CD14-positive monocyte (primary cell): ENCODE measurements at regions of chr11 and their contacts with region 1.

Region 1: GRCh38 chr11:119474682-119475596 is 52.0 kb upstream of the THY1 start:
- DNase-seq: peak; percentile 24 to 49 (median 49)
- H3K4me3 ChIP-seq: no peak overlapping the region
- H3K4me3 Mint-ChIP-seq: no peak overlapping the region
- H3K27ac ChIP-seq: no peak overlapping the region
- H3K27ac Mint-ChIP-seq: peak overlapping the region in 1 of 7 donors; percentile 21
- H3K4me1 ChIP-seq: no peaks in the 10 kb centered on the region
- H3K4me1 Mint-ChIP-seq: peaks cover 4% of the 10 kb centered on the region
- H3K27me3 ChIP-seq: no peaks in the 10 kb centered on the region
- H3K27me3 Mint-ChIP-seq: peaks cover 8 to 22% (median 10%) of the 10 kb centered on the region in 3 donors
- CTCF ChIP-seq: peak; percentile 89

Region 2: DNA sequence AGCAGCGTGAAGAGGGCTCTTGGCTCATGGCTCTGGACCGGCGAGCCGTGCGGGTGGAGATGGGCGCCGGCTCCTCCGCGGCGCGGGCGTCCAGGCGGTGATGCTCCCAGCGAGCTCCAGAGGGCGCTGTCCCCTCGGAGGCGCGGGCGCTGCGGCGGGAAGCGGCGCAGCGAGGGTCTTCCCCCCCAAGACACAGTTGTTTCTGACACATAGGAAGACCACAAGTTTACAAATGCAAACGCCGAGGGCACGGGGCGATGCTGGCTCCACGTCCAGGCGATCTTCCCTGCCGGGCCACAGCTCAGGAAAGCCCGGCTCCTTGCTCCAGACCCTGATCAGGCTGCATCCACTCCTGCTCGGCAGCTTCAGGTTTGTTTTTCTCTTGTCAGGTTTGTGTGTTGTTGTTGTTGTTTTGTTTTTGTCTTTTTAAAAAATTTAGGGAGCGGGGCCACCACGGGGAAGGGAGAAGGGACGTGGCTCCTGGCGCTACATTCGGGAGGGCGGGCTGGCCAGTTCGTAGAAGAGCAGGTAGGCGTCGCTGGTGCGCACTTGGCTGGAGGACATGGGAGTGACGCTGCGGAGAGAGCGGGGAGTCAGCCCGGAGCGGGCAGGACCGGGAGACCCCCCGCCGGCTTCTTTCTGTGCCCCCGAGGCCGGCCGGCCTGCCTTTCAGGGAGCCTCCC is 118.4 kb before region 1 on chr11:
- intact Hi-C with region 1: loop called (anchors 2 kb)
- DNase-seq: peak; percentile 68 to 75 (median 71)
- H3K4me3 ChIP-seq: peak overlapping the region; percentile 44 to 81 (median 44)
- H3K4me3 Mint-ChIP-seq: peak overlapping the region; percentile 85 to 98
- H3K27ac ChIP-seq: no peak overlapping the region
- H3K27ac Mint-ChIP-seq: peak overlapping the region in 3 of 7 donors; percentile 27 to 84 (median 63)
- H3K4me1 ChIP-seq: peaks cover 0 to 7% of the 10 kb centered on the region in 2 donors
- H3K4me1 Mint-ChIP-seq: peaks cover 11% of the 10 kb centered on the region
- H3K27me3 ChIP-seq: peaks cover 8 to 22% of the 10 kb centered on the region in 2 donors
- H3K27me3 Mint-ChIP-seq: peaks cover 29 to 50% (median 30%) of the 10 kb centered on the region in 3 donors
- CTCF ChIP-seq: peak; percentile 100

Region 3: GRCh38 chr11:119518746-119519730 is 44.1 kb after region 1 on chr11:
- intact Hi-C with region 1: no loop called
- DNase-seq: no peak
- H3K4me3 ChIP-seq: no peak overlapping the region
- H3K4me3 Mint-ChIP-seq: no peak overlapping the region
- H3K27ac ChIP-seq: no peak overlapping the region
- H3K27ac Mint-ChIP-seq: peak overlapping the region in 1 of 7 donors; percentile 69
- H3K4me1 ChIP-seq: peaks cover 10 to 15% of the 10 kb centered on the region in 2 donors
- H3K4me1 Mint-ChIP-seq: peaks cover 19% of the 10 kb centered on the region
- H3K27me3 ChIP-seq: no peaks in the 10 kb centered on the region
- H3K27me3 Mint-ChIP-seq: peaks cover 4 to 15% (median 4%) of the 10 kb centered on the region in 3 donors
- CTCF ChIP-seq: no peak